Adrenal gland (tissue), 19 donors: ENCODE measurements at regions of chr1 and their contacts with region 1.

Region 1: GRCh38 chr1:39326832-39327231 is 122.3 kb downstream of the MACF1 start:
- DNase-seq: no peak
- H3K4me3 ChIP-seq: no peak overlapping the region
- H3K27ac ChIP-seq: no peak overlapping the region
- H3K4me1 ChIP-seq: no peaks in the 10 kb centered on the region
- H3K27me3 ChIP-seq: no peaks in the 10 kb centered on the region
- CTCF ChIP-seq: no peak
- POLR2A ChIP-seq: no peak

Region 2: GRCh38 chr1:39434797-39435395 is 108.1 kb after region 1 on chr1:
- intact Hi-C with region 1: loop called in 1 of 2 experiments (anchors 10 kb)
- DNase-seq: no peak
- H3K4me3 ChIP-seq: no peak overlapping the region
- H3K27ac ChIP-seq: peak overlapping the region in 1 of 5 donors; percentile 2
- H3K4me1 ChIP-seq: no peaks in the 10 kb centered on the region
- H3K27me3 ChIP-seq: no peaks in the 10 kb centered on the region
- CTCF ChIP-seq: no peak
- POLR2A ChIP-seq: no peak

Region 3: GRCh38 chr1:39491146-39491921 is 164.5 kb after region 1 on chr1 and contains the start of gene BMP8A:
- intact Hi-C with region 1: no loop called
- DNase-seq: peak in 5 of 7 donors; percentile 42 to 67 (median 62)
- H3K4me3 ChIP-seq: peak within 1 kb of the TSS in 1 of 4 donors; percentile 61
- H3K27ac ChIP-seq: no peak within 1 kb of the TSS
- H3K4me1 ChIP-seq: peaks cover 6 to 12% of the 10 kb centered on the region in 2 donors
- H3K27me3 ChIP-seq: no peaks in the 10 kb centered on the region
- CTCF ChIP-seq: no peak
- POLR2A ChIP-seq: no peak
- total RNA-seq, gene BMP8A: 0.18 to 1.7 (median 0.57) TPM